ENCODE measurements at regions of chr11 and their contacts with region 1.

Region 1: GRCh38 chr11:1917671-1918516 is 1.6 kb upstream of the TNNT3 start:
- DNase-seq: no peak
- H3K4me3 ChIP-seq: no peak overlapping the region
- H3K27ac ChIP-seq: no peak overlapping the region
- H3K4me1 ChIP-seq: no peaks in the 10 kb centered on the region
- H3K27me3 ChIP-seq: no peaks in the 10 kb centered on the region
- CTCF ChIP-seq: peak; percentile 39 to 63 (median 58)

Region 2: DNA sequence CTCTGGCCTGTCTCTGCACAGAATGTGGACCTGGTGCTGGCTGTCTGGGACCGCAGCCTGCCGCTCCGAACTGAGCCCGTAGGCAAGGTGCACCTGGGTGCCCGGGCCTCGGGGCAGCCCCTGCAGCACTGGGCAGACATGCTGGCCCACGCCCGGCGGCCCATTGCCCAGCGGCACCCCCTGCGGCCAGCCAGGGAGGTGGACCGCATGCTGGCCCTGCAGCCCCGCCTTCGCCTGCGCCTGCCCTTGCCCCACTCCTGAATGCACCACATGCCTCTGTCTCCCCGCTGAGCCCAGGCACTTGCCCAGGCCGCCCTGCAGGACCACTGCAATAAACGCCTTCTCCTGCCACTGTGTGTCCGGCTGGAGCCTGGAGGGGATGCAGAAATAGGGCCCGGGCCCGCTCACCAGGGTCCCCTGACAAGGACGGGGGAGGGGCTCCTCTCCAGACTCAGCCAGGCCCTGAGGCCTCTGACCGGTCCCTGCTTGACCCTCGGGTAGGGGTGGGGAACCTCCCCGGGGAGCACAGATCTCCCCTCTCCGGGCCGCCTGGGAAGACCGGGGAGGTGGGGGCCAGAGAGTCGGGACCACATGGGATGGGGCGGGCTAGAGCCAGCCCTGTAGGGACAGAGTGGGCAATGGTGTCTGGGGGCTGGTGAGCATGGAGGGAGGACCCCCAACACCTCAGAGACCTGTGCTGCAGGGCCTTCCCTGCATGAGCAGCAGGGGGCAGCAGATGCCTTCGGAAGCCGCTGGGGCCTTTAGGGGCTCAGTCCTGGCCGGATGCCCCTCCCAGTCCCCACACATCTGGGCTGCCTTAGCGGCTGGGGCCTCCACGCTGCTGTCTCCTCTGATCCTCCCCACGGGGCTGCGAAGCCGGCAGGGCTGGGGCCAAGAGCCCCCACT is 80.5 kb before region 1 on chr11:
- intact Hi-C with region 1: loop called (anchors 2 kb)
- DNase-seq: no peak
- H3K4me3 ChIP-seq: no peak overlapping the region
- H3K27ac ChIP-seq: no peak overlapping the region
- H3K4me1 ChIP-seq: peaks cover 4% of the 10 kb centered on the region in 2 donors
- H3K27me3 ChIP-seq: no peaks in the 10 kb centered on the region
- CTCF ChIP-seq: peak; percentile 82 to 93 (median 91)

Region 3: GRCh38 chr11:1882519-1883238 is 35.2 kb before region 1 on chr11:
- intact Hi-C with region 1: loop called (anchors 5 kb)
- DNase-seq: peak in 1 of 2 donors; percentile 84
- H3K4me3 ChIP-seq: no peak overlapping the region
- H3K27ac ChIP-seq: peak overlapping the region; percentile 87 to 91
- H3K4me1 ChIP-seq: peaks cover 4 to 25% of the 10 kb centered on the region in 2 donors
- H3K27me3 ChIP-seq: no peaks in the 10 kb centered on the region
- CTCF ChIP-seq: peak; percentile 74 to 92 (median 90)

Region 4: GRCh38 chr11:1889224-1890120 is 28.4 kb before region 1 on chr11:
- intact Hi-C with region 1: loop called (anchors 1 kb)
- DNase-seq: no peak
- H3K4me3 ChIP-seq: no peak overlapping the region
- H3K27ac ChIP-seq: peak overlapping the region in 1 of 2 donors; percentile 12
- H3K4me1 ChIP-seq: no peaks in the 10 kb centered on the region
- H3K27me3 ChIP-seq: no peaks in the 10 kb centered on the region
- CTCF ChIP-seq: no peak

Region 5: DNA sequence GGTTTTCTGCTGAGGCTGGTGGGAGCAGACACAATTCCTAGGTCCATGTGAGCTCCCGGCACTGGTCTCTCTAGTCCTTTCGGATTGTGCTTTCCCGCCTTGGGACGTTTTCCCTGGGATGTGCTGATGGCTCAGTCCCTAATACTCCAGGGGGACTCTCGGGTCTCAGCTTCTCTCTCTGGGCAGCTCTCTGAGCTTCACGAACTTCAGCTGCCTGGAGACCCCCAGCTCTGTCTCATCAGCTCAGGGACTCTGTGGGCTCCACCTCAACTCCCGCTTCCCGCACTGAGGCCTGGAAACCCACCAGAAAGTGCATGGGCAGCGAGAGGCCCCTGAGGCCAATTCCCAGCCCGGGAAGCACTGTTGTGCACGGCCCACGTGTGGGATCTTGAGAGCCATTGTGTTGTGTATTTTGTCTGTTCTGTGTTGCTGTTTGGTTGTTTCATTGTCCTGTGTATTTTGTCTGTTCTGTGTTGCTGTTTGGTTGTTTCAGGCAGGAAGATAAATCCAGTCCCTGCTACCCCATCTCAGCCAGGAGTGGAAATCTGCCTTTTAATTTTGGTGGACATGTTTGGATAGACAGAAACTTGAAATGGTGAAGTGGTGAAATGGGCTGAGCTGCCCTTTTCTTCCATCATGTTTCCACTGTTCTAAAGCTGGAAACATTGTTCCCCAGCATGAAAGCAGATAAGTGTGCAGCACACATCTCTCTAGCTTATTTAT is 11.0 kb before region 1 on chr11:
- intact Hi-C with region 1: no loop called
- DNase-seq: no peak
- H3K4me3 ChIP-seq: no peak overlapping the region
- H3K27ac ChIP-seq: peak overlapping the region; percentile 6 to 66
- H3K4me1 ChIP-seq: peaks cover 0 to 12% of the 10 kb centered on the region in 2 donors
- H3K27me3 ChIP-seq: no peaks in the 10 kb centered on the region
- CTCF ChIP-seq: no peak

Region 6: DNA sequence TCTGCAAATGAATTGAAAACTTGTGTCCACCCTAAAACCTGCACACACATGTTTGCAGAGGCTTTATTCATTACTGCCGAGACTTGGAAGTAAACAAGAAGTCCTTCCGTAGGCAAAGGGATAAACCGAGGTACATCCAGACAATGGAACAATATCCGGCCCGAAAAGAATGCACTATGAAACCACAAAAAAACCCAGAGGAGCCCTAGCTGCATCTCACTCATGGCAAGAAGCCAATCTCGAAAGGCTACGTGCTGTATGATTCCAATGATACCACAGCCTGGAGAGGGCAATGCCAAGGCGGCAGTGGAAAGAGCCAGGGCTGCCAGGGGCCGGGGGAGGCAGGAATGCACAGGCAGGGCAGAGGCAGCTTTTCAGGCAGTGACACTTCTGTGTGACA is 26.1 kb after region 1 on chr11:
- intact Hi-C with region 1: loop called (anchors 1 kb)
- DNase-seq: peak in 1 of 2 donors; percentile 52
- H3K4me3 ChIP-seq: no peak overlapping the region
- H3K27ac ChIP-seq: no peak overlapping the region
- H3K4me1 ChIP-seq: peaks cover 0 to 3% of the 10 kb centered on the region in 2 donors
- H3K27me3 ChIP-seq: no peaks in the 10 kb centered on the region
- CTCF ChIP-seq: no peak

Measured in ascending aorta (tissue), 2 donors.